ENCODE measurements at regions of chr20 and their contacts with region 1.

Region 1: GRCh38 chr20:36199345-36200257 is 36.7 kb upstream of the AAR2 start:
- DNase-seq: peak; percentile 90 to 93
- H3K4me3 ChIP-seq: no peak overlapping the region
- H3K4me3 Mint-ChIP-seq: no peak overlapping the region
- H3K27ac Mint-ChIP-seq: no peak overlapping the region
- H3K4me1 ChIP-seq: no peaks in the 10 kb centered on the region
- H3K4me1 Mint-ChIP-seq: no peaks in the 10 kb centered on the region
- H3K27me3 ChIP-seq: no peaks in the 10 kb centered on the region
- H3K27me3 Mint-ChIP-seq: no peaks in the 10 kb centered on the region
- CTCF ChIP-seq: peak; percentile 99 to 100

Region 2: DNA sequence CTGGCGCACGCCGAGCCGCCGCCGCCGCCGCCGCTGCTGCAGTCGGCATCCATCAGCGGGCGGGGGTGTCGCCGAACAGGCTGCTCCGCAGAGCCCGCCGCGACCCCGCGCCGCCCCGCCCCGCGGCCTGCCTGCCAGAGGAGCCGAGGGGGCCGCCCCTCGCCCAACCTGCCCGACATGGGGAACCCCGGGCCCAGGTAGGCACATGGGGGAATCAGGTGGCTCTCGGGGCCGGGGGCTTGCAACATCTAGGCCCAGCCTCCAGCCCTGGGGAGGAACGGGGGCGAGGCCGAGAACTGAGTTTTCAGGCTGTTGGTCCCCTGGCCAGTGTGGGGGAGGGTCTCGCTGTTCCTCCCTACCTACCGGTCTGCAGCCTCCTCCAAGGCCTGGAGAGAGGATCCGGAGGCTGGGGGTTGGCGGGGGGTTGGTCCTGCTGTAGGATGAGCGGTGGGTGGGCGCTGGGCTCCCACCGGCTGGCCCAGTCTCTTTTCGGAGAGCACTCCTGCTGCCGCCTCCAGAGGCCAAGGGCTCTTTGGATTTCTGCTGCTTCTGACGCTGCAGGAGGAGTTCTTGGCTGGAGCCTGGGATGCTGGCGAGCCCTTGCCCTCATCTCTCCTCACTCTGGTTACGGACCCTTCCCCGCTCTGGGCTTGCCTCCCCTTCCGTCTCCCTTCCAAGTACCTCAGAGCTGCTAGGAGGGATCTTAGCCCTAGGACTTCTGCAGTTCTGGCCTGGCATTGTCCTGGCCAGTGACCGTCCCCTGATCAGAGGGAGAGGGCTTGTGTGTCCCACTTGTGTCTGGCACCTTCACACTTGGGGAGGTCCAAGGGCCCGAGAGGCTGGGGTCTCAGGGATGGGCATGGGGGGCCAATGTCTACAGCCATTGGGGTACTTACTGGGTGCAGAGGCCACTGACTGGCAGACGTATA is 44.6 kb before region 1 on chr20 and contains the start of gene EPB41L1:
- CTCF ChIA-PET with region 1: interaction called, 24 read pairs
- POLR2A ChIA-PET with region 1: no interaction called
- intact Hi-C with region 1: loop called (anchors 1 kb)
- DNase-seq: no peak
- H3K4me3 ChIP-seq: no peak within 1 kb of the TSS
- H3K4me3 Mint-ChIP-seq: no peak within 1 kb of the TSS
- H3K27ac Mint-ChIP-seq: no peak within 1 kb of the TSS
- H3K4me1 ChIP-seq: peaks cover 14% of the 10 kb centered on the region
- H3K4me1 Mint-ChIP-seq: no peaks in the 10 kb centered on the region
- H3K27me3 ChIP-seq: no peaks in the 10 kb centered on the region
- H3K27me3 Mint-ChIP-seq: no peaks in the 10 kb centered on the region
- CTCF ChIP-seq: no peak
- total RNA-seq, gene EPB41L1: 129 and 137 TPM in 2 replicates

Region 3: GRCh38 chr20:36214684-36215256 is 15.2 kb after region 1 on chr20:
- CTCF ChIA-PET with region 1: interaction called, 14 read pairs
- POLR2A ChIA-PET with region 1: no interaction called
- intact Hi-C with region 1: no loop called
- DNase-seq: peak in 1 of 2 experiments; percentile 60
- H3K4me3 ChIP-seq: no peak overlapping the region
- H3K4me3 Mint-ChIP-seq: no peak overlapping the region
- H3K27ac Mint-ChIP-seq: no peak overlapping the region
- H3K4me1 ChIP-seq: no peaks in the 10 kb centered on the region
- H3K4me1 Mint-ChIP-seq: peaks cover 5% of the 10 kb centered on the region
- H3K27me3 ChIP-seq: no peaks in the 10 kb centered on the region
- H3K27me3 Mint-ChIP-seq: no peaks in the 10 kb centered on the region
- CTCF ChIP-seq: peak; percentile 91 to 93